ENCODE measurements at regions of chr9 and their contacts with region 1.

Region 1: DNA sequence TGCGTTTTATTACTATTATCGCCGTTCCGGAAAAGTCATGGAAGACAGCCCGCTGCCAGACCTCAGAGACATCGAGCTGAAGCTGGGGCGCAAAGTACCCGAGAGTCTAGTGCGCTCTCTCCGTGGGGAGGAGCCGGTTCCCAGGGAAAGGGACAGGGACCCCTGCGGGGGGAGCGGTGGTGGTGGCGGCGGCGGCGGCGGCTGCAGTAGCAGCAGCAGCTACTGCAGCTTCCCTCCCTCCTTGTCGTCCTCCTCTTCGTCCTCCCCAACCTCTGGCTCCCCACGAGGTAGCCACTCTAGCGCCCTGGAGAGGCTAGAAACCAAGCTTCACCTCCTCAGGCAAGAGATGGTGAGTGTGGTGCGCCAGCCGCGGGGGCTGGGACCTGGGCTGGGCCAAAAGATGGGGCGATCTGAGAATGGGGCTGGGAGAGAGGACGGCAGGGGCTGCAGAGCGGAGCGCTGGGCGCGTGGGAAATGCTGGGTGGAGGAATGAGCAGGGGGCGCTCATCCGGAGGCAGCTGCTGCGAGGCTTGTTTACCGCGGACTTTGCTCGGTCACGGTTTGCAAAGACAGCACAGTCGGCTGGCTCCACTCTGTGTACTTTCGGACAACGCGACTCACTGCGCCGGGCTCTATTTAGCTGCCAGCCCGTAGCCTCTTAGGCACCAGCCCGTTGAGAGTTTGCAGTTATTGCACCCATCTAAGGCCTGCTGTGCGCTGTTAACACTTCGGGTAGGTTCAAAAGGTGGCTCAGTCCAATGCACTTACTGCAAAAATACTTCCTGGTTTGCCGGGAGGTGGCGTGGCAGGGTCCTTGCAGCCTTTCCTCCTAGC is 1.1 kb downstream of the LURAP1L start:
- DNase-seq: peak; percentile 78
- H3K4me3 ChIP-seq: peak overlapping the region; percentile 58 to 63
- H3K27ac ChIP-seq: peak overlapping the region; percentile 78 to 79
- H3K4me1 ChIP-seq: no peaks in the 10 kb centered on the region
- H3K27me3 ChIP-seq: no peaks in the 10 kb centered on the region
- CTCF ChIP-seq: peak in 3 of 4 experiments; percentile 32 to 53 (median 45)
- POLR2A ChIP-seq: peak; percentile 39

Region 2: DNA sequence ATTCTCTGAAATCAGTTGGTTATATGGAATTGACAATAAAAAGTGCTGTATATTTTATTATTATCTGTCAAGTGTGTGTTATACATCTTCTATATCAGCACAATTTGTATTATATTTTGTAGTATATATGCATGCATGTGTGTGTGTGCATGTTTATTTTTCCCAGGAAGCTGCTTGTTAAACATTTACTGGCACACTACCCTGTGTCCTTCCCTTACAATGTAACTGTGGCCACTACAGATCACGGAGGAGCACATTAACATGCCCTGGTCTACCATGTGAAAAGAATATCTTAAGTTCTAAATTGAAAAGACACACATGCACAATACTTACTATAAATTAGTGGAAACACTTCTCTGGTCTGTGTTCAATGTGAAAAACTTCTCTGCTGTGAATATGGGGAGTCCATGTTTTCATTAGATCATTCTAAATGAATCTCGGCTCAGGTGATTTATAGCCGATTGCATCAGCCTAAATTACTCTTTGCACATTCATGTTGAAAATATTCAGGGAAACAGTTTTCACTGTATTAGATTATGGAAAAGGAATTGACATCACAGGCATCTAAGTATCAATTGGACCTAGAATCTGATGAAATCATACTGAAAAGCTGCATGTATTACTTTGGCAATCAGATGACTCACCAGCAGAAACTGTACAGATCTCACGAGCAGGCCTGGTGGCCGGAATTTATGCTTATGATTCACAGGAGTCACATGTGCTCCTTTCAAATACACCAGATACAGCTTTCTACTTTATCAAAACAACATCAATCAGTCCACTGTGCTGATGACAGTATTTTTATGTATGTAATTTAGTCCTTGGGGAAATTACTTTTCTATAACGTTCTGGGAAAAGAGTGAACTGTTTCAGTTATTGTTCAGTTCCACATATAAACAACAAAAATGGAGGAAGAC is 38.3 kb after region 1 on chr9:
- intact Hi-C with region 1: loop called (anchors 5 kb)
- DNase-seq: peak; percentile 44
- H3K4me3 ChIP-seq: no peak overlapping the region
- H3K27ac ChIP-seq: peak overlapping the region; percentile 26 to 53
- H3K4me1 ChIP-seq: no peaks in the 10 kb centered on the region
- H3K27me3 ChIP-seq: no peaks in the 10 kb centered on the region
- CTCF ChIP-seq: peak in 2 of 4 experiments; percentile 41 to 50
- POLR2A ChIP-seq: no peak

Region 3: DNA sequence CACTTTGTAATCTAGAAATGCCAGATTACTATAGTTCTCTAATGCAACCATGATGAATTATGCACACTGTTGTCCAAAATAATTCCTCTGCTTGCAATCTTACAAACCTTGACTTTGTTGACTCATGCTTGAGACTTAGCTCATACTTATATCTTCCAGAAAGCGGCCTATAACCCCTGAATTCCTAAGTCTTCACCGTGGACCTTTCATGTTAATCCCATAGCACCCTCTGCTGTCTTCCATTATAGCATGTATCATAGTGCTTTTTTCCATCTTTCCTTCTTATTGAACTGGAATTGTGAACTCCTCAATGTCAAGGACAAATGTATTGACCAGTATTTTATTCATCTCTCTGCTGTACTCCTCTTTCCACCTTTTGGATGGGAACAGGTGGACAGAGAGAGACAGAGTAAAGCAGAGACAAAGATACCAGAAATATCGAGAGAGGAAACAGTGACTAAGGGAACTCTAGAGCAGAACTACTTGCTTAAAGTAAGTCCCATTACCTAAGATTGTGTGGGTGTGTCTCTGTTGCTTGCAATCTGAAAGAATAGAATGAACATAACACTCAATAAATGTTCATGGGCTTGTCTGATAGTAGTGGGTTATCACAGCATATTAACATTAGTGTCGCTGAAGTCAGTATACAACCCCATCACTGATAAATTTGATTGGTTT is 109.0 kb after region 1 on chr9:
- intact Hi-C with region 1: loop called (anchors 5 kb)
- DNase-seq: no peak
- H3K4me3 ChIP-seq: no peak overlapping the region
- H3K27ac ChIP-seq: no peak overlapping the region
- H3K4me1 ChIP-seq: no peaks in the 10 kb centered on the region
- H3K27me3 ChIP-seq: no peaks in the 10 kb centered on the region
- CTCF ChIP-seq: peak in 3 of 4 experiments; percentile 46 to 74 (median 58)
- POLR2A ChIP-seq: no peak